ENCODE measurements at regions of chr22 and their contacts with region 1.

Region 1: GRCh38 chr22:40044102-40044869 is 49.5 kb downstream of the FAM83F start:
- DNase-seq: peak; percentile 95 to 99 (median 99)
- H3K4me3 ChIP-seq: peak overlapping the region; percentile 83
- H3K4me3 Mint-ChIP-seq: peak overlapping the region; percentile 91 to 99 (median 97)
- H3K27ac ChIP-seq: peak overlapping the region; percentile 97
- H3K27ac Mint-ChIP-seq: peak overlapping the region; percentile 98 to 100 (median 100)
- H3K4me1 ChIP-seq: peaks cover 41% of the 10 kb centered on the region
- H3K4me1 Mint-ChIP-seq: peaks cover 35 to 47% (median 47%) of the 10 kb centered on the region in 3 donors
- H3K27me3 ChIP-seq: no peaks in the 10 kb centered on the region
- H3K27me3 Mint-ChIP-seq: peaks cover 6 to 8% of the 10 kb centered on the region in 2 donors

Region 2: GRCh38 chr22:39520054-39520891 is 524.0 kb before region 1 on chr22 and contains the start of gene ATF4:
- CTCF ChIA-PET with region 1: interaction called, 4 read pairs
- POLR2A ChIA-PET with region 1: interaction called, 15 read pairs
- DNase-seq: peak; percentile 94 to 99 (median 96)
- H3K4me3 ChIP-seq: peak within 1 kb of the TSS; percentile 90
- H3K4me3 Mint-ChIP-seq: peak within 1 kb of the TSS; percentile 89 to 99 (median 96)
- H3K27ac ChIP-seq: peak within 1 kb of the TSS; percentile 80
- H3K27ac Mint-ChIP-seq: peak within 1 kb of the TSS; percentile 95 to 100 (median 98)
- H3K4me1 ChIP-seq: peaks cover 39% of the 10 kb centered on the region
- H3K4me1 Mint-ChIP-seq: peaks cover 47 to 56% (median 51%) of the 10 kb centered on the region in 3 donors
- H3K27me3 ChIP-seq: no peaks in the 10 kb centered on the region
- H3K27me3 Mint-ChIP-seq: peaks cover 0 to 14% of the 10 kb centered on the region in 2 donors
- total RNA-seq, gene ATF4: 757 to 758 TPM

Region 3: DNA sequence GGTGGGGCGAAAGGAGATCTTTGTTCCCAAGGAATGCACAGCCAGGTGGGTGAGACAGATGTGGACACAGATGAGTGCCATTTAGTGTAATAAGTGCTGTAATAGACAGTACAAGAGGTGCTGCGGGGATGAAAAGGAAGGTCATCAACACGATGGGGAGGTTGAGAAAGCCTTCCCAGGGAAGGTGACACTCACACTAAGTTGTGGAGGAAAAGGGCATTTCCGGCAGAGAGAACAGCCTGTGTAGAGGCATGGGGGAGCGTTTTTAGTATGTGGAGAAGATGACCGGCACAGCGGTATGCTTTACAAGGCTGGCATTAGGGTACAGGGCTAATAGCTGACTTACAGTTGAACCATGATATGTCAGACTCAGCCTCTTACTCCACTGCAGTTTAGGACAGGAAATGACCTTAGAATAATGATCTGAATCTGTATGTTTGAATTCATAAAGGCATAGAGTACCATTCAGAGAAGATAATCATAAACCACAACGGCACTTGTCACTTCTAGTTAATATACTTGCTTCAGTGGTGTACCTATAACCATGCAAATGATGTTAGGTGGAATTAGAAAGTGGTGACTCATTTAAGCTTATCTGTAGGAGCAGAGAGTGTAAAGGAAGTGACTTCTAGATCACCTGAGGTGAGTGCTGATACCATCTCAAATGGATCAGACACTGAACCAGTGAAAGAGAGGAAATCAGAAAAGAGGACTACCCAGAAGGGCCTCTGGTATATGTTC is 11.0 kb after region 1 on chr22:
- CTCF ChIA-PET with region 1: interaction called, 5 read pairs
- POLR2A ChIA-PET with region 1: interaction called, 20 read pairs
- DNase-seq: peak in 2 of 5 donors; percentile 37 to 43
- H3K4me3 ChIP-seq: peak overlapping the region; percentile 9
- H3K4me3 Mint-ChIP-seq: peak overlapping the region; percentile 7 to 80 (median 68)
- H3K27ac ChIP-seq: peak overlapping the region; percentile 10
- H3K27ac Mint-ChIP-seq: peak overlapping the region; percentile 80 to 98 (median 88)
- H3K4me1 ChIP-seq: peaks cover 72% of the 10 kb centered on the region
- H3K4me1 Mint-ChIP-seq: peaks cover 76 to 90% (median 90%) of the 10 kb centered on the region in 3 donors
- H3K27me3 ChIP-seq: no peaks in the 10 kb centered on the region
- H3K27me3 Mint-ChIP-seq: peaks cover 0 to 1% of the 10 kb centered on the region in 2 donors

Region 4: GRCh38 chr22:40177738-40178416 is 133.6 kb after region 1 on chr22 and contains the start of gene TNRC6B:
- CTCF ChIA-PET with region 1: interaction called, 7 read pairs
- POLR2A ChIA-PET with region 1: interaction called, 20 read pairs
- DNase-seq: peak; percentile 45 to 88 (median 84)
- H3K4me3 ChIP-seq: peak within 1 kb of the TSS; percentile 81
- H3K4me3 Mint-ChIP-seq: peak within 1 kb of the TSS; percentile 82 to 93 (median 88)
- H3K27ac ChIP-seq: peak within 1 kb of the TSS; percentile 74
- H3K27ac Mint-ChIP-seq: peak within 1 kb of the TSS; percentile 80 to 96 (median 88)
- H3K4me1 ChIP-seq: peaks cover 54% of the 10 kb centered on the region
- H3K4me1 Mint-ChIP-seq: peaks cover 53 to 73% (median 67%) of the 10 kb centered on the region in 3 donors
- H3K27me3 ChIP-seq: no peaks in the 10 kb centered on the region
- H3K27me3 Mint-ChIP-seq: no peaks in the 10 kb centered on the region
- total RNA-seq, gene TNRC6B: 32.8 to 37.8 TPM

Measured in CD8-positive, alpha-beta memory T cell (primary cell).